ENCODE measurements at regions of chr1 and their contacts with region 1.

Region 1: GRCh38 chr1:179081687-179082332 is at the start of gene TOR3A:
- DNase-seq: peak; percentile 51 to 82 (median 58)
- ATAC-seq: peak; percentile 80
- H3K4me3 ChIP-seq: peak within 1 kb of the TSS; percentile 93
- H3K4me3 Mint-ChIP-seq: peak within 1 kb of the TSS; percentile 91 to 100 (median 95)
- H3K27ac ChIP-seq: peak within 1 kb of the TSS; percentile 76
- H3K27ac Mint-ChIP-seq: peak within 1 kb of the TSS; percentile 84 to 99 (median 95)
- H3K4me1 ChIP-seq: peaks cover 4 to 11% of the 10 kb centered on the region in 2 donors
- H3K4me1 Mint-ChIP-seq: peaks cover 14 to 38% (median 25%) of the 10 kb centered on the region in 7 donors
- H3K27me3 ChIP-seq: no peaks in the 10 kb centered on the region
- H3K27me3 Mint-ChIP-seq: no peaks in the 10 kb centered on the region
- total RNA-seq, gene TOR3A: 18.8 to 43.8 (median 21.7) TPM

Region 2: DNA sequence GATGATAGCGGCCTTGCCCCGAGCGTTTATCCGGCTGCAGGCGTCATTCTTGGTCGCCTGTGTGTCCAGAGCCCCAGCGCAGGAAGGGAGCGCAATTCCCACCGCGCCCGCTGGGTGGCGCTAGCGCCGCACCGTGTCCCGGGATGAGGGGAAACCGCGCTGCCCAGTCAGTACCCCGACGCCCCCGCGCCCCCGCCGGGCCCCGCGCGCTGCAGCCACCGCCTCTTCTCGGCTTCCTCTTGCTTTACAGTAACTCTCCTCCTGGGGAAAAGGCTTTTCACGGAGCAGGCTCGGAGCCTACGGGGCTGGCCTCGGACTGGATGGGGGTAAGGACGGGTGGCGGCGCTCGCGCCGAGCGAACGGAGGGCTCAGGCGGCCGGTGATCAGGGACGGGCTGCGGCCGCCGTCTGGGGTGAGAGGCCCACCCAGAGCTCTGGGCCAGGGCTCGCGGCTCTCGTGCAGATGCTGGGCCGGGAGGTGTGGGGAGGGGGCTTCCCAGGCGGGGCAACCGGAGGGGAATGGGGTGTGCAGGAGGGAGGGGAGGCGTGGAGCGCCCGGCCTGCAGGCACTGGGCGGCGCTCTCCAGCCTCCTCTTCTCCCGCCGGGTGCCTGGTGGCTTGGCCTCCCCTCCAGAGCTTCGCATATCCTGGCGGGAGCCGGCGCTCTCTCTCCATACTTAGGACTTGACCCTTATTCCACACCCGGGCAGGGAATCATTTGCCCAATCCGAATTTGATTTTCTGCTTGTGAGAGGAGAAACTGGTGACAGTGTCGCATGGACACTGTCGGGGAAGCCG is 539.1 kb before region 1 on chr1:
- CTCF ChIA-PET with region 1: no interaction called
- POLR2A ChIA-PET with region 1: no interaction called
- intact Hi-C with region 1: loop called in 1 of 2 experiments (anchors 10 kb)
- DNase-seq: peak; percentile 61 to 98 (median 87)
- ATAC-seq: peak; percentile 96
- H3K4me3 ChIP-seq: peak overlapping the region; percentile 99
- H3K4me3 Mint-ChIP-seq: peak overlapping the region; percentile 89 to 96 (median 92)
- H3K27ac ChIP-seq: peak overlapping the region; percentile 56
- H3K27ac Mint-ChIP-seq: peak overlapping the region; percentile 32 to 88 (median 83)
- H3K4me1 ChIP-seq: peaks cover 0 to 5% of the 10 kb centered on the region in 2 donors
- H3K4me1 Mint-ChIP-seq: peaks cover 0 to 15% (median 10%) of the 10 kb centered on the region in 7 donors
- H3K27me3 ChIP-seq: no peaks in the 10 kb centered on the region
- H3K27me3 Mint-ChIP-seq: no peaks in the 10 kb centered on the region

Region 3: GRCh38 chr1:179034720-179035119 is 47.1 kb before region 1 on chr1:
- CTCF ChIA-PET with region 1: interaction called, 5 read pairs
- POLR2A ChIA-PET with region 1: interaction called, 4 read pairs
- intact Hi-C with region 1: loop called in 1 of 2 experiments (anchors 1 kb)
- DNase-seq: no peak
- ATAC-seq: peak; percentile 60
- H3K4me3 ChIP-seq: no peak overlapping the region
- H3K4me3 Mint-ChIP-seq: peak overlapping the region in 5 of 10 donors; percentile 10 to 59 (median 21)
- H3K27ac ChIP-seq: no peak overlapping the region
- H3K27ac Mint-ChIP-seq: peak overlapping the region in 7 of 9 donors; percentile 0 to 91 (median 74)
- H3K4me1 ChIP-seq: peaks cover 26 to 33% of the 10 kb centered on the region in 2 donors
- H3K4me1 Mint-ChIP-seq: peaks cover 66 to 92% (median 80%) of the 10 kb centered on the region in 7 donors
- H3K27me3 ChIP-seq: no peaks in the 10 kb centered on the region
- H3K27me3 Mint-ChIP-seq: no peaks in the 10 kb centered on the region

Region 4: DNA sequence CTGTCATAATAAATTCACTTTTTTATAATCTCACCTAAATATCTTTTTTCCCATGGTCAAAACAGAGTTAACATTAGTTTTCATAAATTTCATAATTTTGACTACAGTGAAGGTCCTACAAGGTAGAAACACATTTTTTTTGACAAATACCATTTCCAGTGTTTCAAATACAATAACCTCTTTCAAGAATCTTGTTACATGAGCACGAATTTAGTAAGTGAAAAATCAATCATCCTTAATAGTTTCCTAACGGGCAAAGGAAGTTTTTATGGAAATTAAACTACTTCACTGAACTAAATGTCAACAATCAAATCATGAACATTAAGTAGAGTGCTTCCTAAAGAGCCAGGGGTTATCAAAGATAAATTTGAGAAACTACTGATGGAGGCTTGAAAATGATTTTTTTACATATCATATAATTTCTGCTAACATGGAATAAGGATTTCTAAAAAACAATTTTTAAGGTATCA is 112.3 kb after region 1 on chr1:
- CTCF ChIA-PET with region 1: interaction called, 3 read pairs
- POLR2A ChIA-PET with region 1: no interaction called
- intact Hi-C with region 1: loop called (anchors 1 kb)
- DNase-seq: no peak
- ATAC-seq: no peak
- H3K4me3 ChIP-seq: no peak overlapping the region
- H3K4me3 Mint-ChIP-seq: no peak overlapping the region
- H3K27ac ChIP-seq: no peak overlapping the region
- H3K27ac Mint-ChIP-seq: peak overlapping the region in 1 of 9 donors; percentile 64
- H3K4me1 ChIP-seq: no peaks in the 10 kb centered on the region
- H3K4me1 Mint-ChIP-seq: peaks cover 14 to 33% (median 25%) of the 10 kb centered on the region in 7 donors
- H3K27me3 ChIP-seq: no peaks in the 10 kb centered on the region
- H3K27me3 Mint-ChIP-seq: no peaks in the 10 kb centered on the region

Region 5: GRCh38 chr1:179293340-179294327 is 211.8 kb after region 1 on chr1 and contains the start of gene SOAT1:
- CTCF ChIA-PET with region 1: interaction called, 3 read pairs
- POLR2A ChIA-PET with region 1: interaction called, 4 read pairs
- intact Hi-C with region 1: loop called (anchors 1 kb)
- DNase-seq: peak; percentile 85 to 94 (median 90)
- ATAC-seq: peak; percentile 98
- H3K4me3 ChIP-seq: peak within 1 kb of the TSS; percentile 78
- H3K4me3 Mint-ChIP-seq: peak within 1 kb of the TSS; percentile 83 to 97 (median 92)
- H3K27ac ChIP-seq: peak within 1 kb of the TSS; percentile 96
- H3K27ac Mint-ChIP-seq: peak within 1 kb of the TSS; percentile 79 to 97 (median 93)
- H3K4me1 ChIP-seq: peaks cover 21 to 33% of the 10 kb centered on the region in 2 donors
- H3K4me1 Mint-ChIP-seq: peaks cover 28 to 51% (median 45%) of the 10 kb centered on the region in 7 donors
- H3K27me3 ChIP-seq: no peaks in the 10 kb centered on the region
- H3K27me3 Mint-ChIP-seq: no peaks in the 10 kb centered on the region
- total RNA-seq, gene SOAT1: 40.6 to 52.8 (median 45.0) TPM

Region 6: GRCh38 chr1:179493323-179493722 is 411.5 kb after region 1 on chr1:
- CTCF ChIA-PET with region 1: no interaction called
- POLR2A ChIA-PET with region 1: no interaction called
- intact Hi-C with region 1: no loop called
- DNase-seq: no peak
- ATAC-seq: no peak
- H3K4me3 ChIP-seq: no peak overlapping the region
- H3K4me3 Mint-ChIP-seq: no peak overlapping the region
- H3K27ac ChIP-seq: no peak overlapping the region
- H3K27ac Mint-ChIP-seq: no peak overlapping the region
- H3K4me1 ChIP-seq: no peaks in the 10 kb centered on the region
- H3K4me1 Mint-ChIP-seq: peaks cover 0 to 2% (median 0%) of the 10 kb centered on the region in 7 donors
- H3K27me3 ChIP-seq: no peaks in the 10 kb centered on the region
- H3K27me3 Mint-ChIP-seq: peaks cover 0 to 23% (median 10%) of the 10 kb centered on the region in 5 donors

Region 7: DNA sequence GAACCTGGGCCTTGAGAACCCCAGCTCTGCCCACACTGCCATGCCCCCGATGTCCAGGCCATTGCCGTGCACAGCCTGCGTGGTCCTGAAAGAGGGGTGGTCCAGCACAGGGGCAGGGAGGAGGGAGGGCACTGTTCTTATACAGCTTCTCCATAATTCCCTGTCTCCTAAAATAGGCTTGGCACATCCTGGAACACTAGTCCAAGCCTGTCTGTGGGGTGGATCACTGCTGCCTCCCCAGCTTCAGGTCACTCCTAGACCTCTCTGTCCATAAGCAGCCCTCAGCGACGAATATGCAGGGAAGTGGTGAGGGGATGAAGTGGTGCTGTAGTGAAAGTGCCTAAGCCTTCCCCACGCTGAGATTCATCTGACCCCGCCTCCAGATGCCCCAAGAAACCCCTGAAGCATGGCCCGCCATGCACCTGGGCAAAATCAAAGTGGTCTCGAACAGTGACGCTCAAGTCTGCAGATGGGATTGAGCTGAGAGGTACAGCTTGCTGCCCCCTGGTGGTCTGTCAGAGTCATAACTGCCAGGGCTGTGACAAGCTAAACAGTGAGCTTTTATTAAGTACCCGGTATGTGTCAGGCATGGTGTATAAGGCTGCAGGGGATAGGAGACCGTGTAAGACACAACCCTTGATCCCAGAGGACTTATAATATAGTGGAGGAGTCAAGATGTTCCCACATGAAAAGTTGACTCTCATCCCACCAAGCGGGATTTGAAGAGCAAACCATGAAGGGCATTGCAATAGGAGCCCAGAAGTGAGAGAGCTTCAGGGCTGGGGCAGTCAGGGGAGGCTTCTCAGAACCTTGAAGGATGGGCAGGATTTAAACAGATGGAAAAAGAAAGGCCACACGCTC is 727.9 kb after region 1 on chr1:
- CTCF ChIA-PET with region 1: no interaction called
- POLR2A ChIA-PET with region 1: interaction called, 3 read pairs
- intact Hi-C with region 1: loop called (anchors 1 to 10 kb)
- DNase-seq: peak; percentile 53 to 82 (median 78)
- ATAC-seq: peak; percentile 87
- H3K4me3 ChIP-seq: no peak overlapping the region
- H3K4me3 Mint-ChIP-seq: peak overlapping the region in 5 of 10 donors; percentile 20 to 46 (median 32)
- H3K27ac ChIP-seq: no peak overlapping the region
- H3K27ac Mint-ChIP-seq: peak overlapping the region in 6 of 9 donors; percentile 2 to 82 (median 26)
- H3K4me1 ChIP-seq: peaks cover 6 to 13% of the 10 kb centered on the region in 2 donors
- H3K4me1 Mint-ChIP-seq: peaks cover 1 to 13% (median 12%) of the 10 kb centered on the region in 7 donors
- H3K27me3 ChIP-seq: no peaks in the 10 kb centered on the region
- H3K27me3 Mint-ChIP-seq: peaks cover 0 to 6% (median 0%) of the 10 kb centered on the region in 5 donors